Mammary epithelial cell (primary cell): ENCODE measurements at regions of chr14 and their contacts with region 1.

Region 1: GRCh38 chr14:20454516-20455354 is at the starts of genes APEX1 and OSGEP:
- DNase-seq: peak; percentile 98
- H3K4me3 ChIP-seq: peak within 1 kb of the TSS; percentile 94 to 97 (median 97)
- H3K27ac ChIP-seq: peak within 1 kb of the TSS; percentile 94
- H3K4me1 ChIP-seq: peaks cover 9% of the 10 kb centered on the region
- H3K27me3 ChIP-seq: no peaks in the 10 kb centered on the region
- CTCF ChIP-seq: no peak
- total RNA-seq, gene APEX1: 96.4 to 128 TPM
- total RNA-seq, gene OSGEP: 22.6 to 34.8 TPM

Region 2: DNA sequence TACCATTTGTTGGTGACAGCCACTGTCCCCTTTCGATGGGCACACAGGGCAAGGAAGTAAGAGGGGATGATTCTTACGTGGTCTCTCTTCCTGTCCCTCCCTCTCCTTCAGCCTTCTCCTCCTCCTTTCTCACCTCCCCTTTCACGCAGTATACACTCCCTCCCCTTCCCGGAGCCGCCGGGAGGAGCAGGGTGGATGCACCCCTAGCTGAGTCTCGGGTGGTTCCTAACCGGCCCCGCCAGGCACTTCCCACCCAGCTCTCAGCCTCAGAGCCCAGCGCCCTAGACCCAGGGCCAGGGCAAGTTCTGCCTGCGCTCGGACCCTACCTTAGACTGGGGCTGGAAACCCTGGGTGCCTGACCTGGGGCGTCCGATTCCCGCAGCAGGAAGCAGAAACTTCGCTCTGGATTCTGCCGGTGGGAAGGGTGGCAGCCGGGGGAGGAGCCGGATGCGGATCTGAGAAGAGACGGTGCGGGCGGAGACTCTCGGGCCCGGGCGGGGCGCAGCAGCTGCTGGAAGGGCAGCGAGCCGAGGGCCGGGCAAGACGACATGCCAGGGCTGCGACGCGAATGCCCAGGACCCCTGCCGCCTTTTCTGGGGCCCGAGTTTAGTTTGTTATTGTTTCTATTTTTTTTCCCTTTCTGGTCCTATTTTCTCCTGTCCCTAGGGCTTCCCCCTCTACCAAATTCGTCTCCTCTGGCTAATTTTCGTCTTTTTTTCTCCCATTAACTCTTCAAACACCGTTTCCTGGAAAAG is 41.5 kb before region 1 on chr14 and contains the start of gene TEP1:
- CTCF ChIA-PET with region 1: interaction called, 4 read pairs
- dilution Hi-C with region 1: no loop called
- in situ Hi-C with region 1: loop called in 1 of 2 experiments (anchors 5 kb)
- intact Hi-C with region 1: loop called (anchors 1 kb)
- DNase-seq: peak; percentile 87
- H3K4me3 ChIP-seq: peak within 1 kb of the TSS; percentile 92 to 98 (median 97)
- H3K27ac ChIP-seq: peak within 1 kb of the TSS; percentile 81
- H3K4me1 ChIP-seq: peaks cover 11% of the 10 kb centered on the region
- H3K27me3 ChIP-seq: no peaks in the 10 kb centered on the region
- CTCF ChIP-seq: no peak
- total RNA-seq, gene TEP1: 27.5 to 28.1 TPM